ENCODE measurements at regions of chr11 and their contacts with region 1.

Region 1: GRCh38 chr11:120652705-120653335 is 141.3 kb downstream of the GRIK4 start:
- DNase-seq: no peak
- H3K4me3 ChIP-seq: no peak overlapping the region
- H3K27ac ChIP-seq: no peak overlapping the region
- H3K4me1 ChIP-seq: no peaks in the 10 kb centered on the region
- H3K27me3 ChIP-seq: no peaks in the 10 kb centered on the region
- CTCF ChIP-seq: no peak

Region 2: DNA sequence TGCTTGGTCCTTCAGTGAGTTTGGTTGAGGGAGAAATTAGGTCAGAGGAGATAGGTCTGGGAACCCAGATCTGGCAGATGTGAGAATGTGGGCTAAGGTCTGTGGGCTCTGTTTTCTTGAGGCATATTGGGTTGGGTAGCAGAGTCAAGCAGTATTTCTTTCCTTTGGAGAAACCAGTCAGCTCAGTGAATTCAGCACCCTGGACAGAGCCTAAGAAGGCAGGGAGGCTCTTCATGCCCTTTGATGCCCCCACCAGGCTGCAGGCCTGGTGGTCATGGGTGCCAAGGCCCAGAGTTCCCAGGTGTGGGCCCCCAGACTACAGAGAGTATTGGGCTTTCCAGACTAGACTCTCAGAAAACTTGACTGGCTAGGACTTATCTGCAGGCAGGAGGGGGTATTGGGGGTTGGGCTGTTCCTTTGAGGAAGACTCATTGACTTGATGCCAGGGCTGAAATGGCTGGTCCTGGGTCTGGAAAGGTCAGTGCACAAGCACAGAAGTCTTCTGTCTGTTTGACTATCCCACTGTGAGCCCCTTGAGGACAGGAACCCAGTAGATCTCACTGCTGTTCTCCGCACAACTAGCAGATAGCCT is 878.6 kb before region 1 on chr11:
- CTCF ChIA-PET with region 1: no interaction called
- dilution Hi-C with region 1: no loop called
- in situ Hi-C with region 1: no loop called
- intact Hi-C with region 1: loop called (anchors 10 kb)
- DNase-seq: peak; percentile 29
- H3K4me3 ChIP-seq: no peak overlapping the region
- H3K27ac ChIP-seq: no peak overlapping the region
- H3K4me1 ChIP-seq: no peaks in the 10 kb centered on the region
- H3K27me3 ChIP-seq: no peaks in the 10 kb centered on the region
- CTCF ChIP-seq: no peak